ENCODE measurements at regions of chr7 and their contacts with region 1.

Region 1: DNA sequence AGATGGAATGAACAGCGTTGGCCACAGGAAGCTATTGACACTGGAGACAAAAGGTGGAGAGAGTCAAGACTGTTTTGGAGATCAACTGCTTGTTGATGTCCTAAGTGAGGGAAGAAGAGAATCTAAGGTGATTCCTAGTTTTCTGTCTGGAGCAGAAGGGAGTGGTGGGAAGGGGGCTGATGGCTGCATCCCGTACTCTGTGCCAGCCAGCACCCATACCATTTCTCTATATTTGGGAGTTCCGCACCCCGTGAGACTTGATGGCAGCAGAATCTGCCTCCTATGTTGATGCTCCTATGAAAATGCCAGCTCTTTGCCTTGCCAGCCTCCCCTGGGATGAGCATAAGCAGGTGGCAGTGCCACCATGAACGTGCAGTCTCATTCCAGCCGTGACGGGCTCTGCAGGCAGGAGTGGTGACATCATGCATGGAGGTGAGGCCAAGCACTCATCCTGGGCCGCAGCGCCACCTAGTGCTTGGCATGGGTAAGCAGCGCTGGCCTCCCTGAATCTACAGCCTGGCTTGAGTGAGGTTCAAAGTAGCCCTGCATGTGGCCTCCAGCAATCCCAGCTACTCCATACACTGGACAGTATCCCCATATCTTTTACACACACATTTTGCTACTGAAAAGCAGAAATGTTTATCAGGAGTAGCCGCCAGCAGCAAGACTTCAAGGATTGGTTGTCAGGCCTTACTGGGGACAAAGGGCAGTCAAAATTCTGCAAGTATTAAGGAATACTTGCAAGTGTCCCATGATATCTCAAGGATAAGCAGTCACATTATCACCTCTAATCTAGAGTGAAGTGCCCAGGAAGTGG is 43.0 kb downstream of the PODXL start:
- DNase-seq: peak; percentile 86
- H3K4me3 Mint-ChIP-seq: no peak overlapping the region
- H3K27ac Mint-ChIP-seq: peak overlapping the region; percentile 17
- H3K4me1 Mint-ChIP-seq: peaks cover 7% of the 10 kb centered on the region
- H3K27me3 Mint-ChIP-seq: no peaks in the 10 kb centered on the region
- CTCF ChIP-seq: peak; percentile 87

Region 2: DNA sequence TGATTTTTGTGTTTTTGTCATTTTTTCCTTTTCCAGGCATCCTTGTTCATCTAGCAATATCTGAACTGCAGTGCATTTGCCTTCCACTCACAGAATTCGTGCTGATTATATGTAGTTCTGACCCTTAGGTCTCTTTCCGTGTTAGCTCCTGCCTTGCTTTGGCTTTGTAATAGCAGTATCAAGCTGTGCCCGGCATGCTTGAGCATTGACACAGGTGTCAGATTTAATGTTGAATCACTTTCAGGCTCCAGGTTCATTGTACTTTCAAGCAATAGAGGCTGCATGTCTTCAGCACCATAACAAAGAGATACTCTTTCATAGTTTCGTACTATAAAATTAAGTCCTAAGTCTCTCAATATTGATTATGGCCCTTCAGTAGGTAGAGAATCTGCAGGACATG is 41.8 kb before region 1 on chr7:
- CTCF ChIA-PET with region 1: no interaction called
- POLR2A ChIA-PET with region 1: no interaction called
- intact Hi-C with region 1: no loop called
- DNase-seq: no peak
- H3K4me3 Mint-ChIP-seq: no peak overlapping the region
- H3K27ac Mint-ChIP-seq: no peak overlapping the region
- H3K4me1 Mint-ChIP-seq: no peaks in the 10 kb centered on the region
- H3K27me3 Mint-ChIP-seq: no peaks in the 10 kb centered on the region
- CTCF ChIP-seq: no peak

Region 3: DNA sequence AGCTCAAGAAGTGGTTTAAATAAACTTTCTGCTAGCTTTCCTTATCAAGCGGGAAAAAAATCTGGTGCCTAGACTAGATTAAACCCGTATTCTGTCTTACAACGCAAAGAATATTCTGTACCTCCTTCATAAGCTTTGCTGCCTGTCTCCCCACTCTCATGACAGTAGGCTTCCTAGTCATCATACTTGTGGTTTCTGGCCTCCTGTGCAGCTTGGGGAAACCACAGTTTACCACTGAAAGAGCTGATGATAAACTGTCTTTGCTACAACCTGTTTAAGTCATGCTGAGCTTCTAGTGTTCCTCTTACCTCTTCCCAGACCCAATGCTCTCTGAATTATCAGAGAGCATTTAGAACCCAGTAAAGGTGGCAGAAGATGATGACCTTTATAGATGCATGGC is 12.0 kb before region 1 on chr7:
- CTCF ChIA-PET with region 1: interaction called, 24 read pairs
- POLR2A ChIA-PET with region 1: interaction called, 4 read pairs
- intact Hi-C with region 1: no loop called
- DNase-seq: no peak
- H3K4me3 Mint-ChIP-seq: no peak overlapping the region
- H3K27ac Mint-ChIP-seq: no peak overlapping the region
- H3K4me1 Mint-ChIP-seq: no peaks in the 10 kb centered on the region
- H3K27me3 Mint-ChIP-seq: no peaks in the 10 kb centered on the region
- CTCF ChIP-seq: no peak

Region 4: GRCh38 chr7:131546583-131547111 is 33.2 kb after region 1 on chr7:
- CTCF ChIA-PET with region 1: interaction called, 10 read pairs
- POLR2A ChIA-PET with region 1: no interaction called
- intact Hi-C with region 1: no loop called
- DNase-seq: peak; percentile 33
- H3K4me3 Mint-ChIP-seq: no peak overlapping the region
- H3K27ac Mint-ChIP-seq: no peak overlapping the region
- H3K4me1 Mint-ChIP-seq: peaks cover 14% of the 10 kb centered on the region
- H3K27me3 Mint-ChIP-seq: no peaks in the 10 kb centered on the region
- CTCF ChIP-seq: peak; percentile 60

Region 5: GRCh38 chr7:131554880-131555516 is 41.5 kb after region 1 on chr7:
- CTCF ChIA-PET with region 1: interaction called, 10 read pairs
- POLR2A ChIA-PET with region 1: interaction called, 4 read pairs
- intact Hi-C with region 1: no loop called
- DNase-seq: no peak
- H3K4me3 Mint-ChIP-seq: peak overlapping the region; percentile 67
- H3K27ac Mint-ChIP-seq: no peak overlapping the region
- H3K4me1 Mint-ChIP-seq: no peaks in the 10 kb centered on the region
- H3K27me3 Mint-ChIP-seq: peaks cover 21% of the 10 kb centered on the region
- CTCF ChIP-seq: no peak

Region 6: DNA sequence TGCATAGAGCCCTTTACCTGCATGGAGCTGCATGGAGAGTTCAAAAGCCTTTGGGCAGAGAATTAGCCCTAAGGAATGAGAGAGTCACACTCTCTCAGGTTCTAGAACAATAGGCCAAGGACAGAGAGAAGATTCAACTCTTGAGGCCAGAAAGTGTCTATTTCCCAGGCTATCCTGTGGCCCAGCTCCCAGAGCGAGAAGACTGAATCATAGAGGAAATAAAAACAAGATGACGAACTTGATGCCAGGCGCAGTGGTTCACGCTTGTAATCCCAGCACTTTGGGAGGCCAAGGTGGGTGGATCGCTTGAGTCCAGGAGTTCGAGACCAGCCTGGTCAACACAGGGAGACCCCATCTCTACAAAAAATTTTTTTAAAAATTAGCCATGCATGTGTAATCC is 61.3 kb after region 1 on chr7:
- CTCF ChIA-PET with region 1: no interaction called
- POLR2A ChIA-PET with region 1: no interaction called
- intact Hi-C with region 1: no loop called
- DNase-seq: peak; percentile 36
- H3K4me3 Mint-ChIP-seq: no peak overlapping the region
- H3K27ac Mint-ChIP-seq: no peak overlapping the region
- H3K4me1 Mint-ChIP-seq: no peaks in the 10 kb centered on the region
- H3K27me3 Mint-ChIP-seq: no peaks in the 10 kb centered on the region
- CTCF ChIP-seq: no peak

Region 7: DNA sequence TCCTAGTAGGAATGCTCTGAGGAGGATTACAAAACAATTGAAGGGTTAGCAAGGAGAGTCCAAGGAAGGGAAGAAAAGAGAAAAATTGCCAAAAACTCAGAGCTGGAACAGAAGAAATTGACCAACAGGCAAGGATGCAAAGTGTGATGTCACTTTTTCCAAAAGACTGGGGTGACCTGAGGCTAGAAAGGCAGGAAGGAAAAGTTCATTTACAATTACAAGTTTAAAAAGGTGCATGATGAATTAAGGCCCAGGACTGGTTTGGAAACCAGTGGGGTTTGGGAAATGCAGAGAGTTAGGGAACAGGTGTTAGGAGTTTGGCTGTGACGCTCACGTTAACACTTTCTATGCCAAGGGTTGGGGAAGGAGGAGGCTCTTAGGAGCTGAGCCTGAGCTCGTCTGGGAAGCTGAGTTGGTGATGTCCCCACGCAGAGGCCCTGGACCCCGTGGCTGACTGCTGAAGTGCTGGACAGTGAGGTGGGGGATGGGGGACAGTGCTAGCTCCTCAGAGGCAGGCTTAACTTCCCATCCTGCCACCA is 135.6 kb after region 1 on chr7:
- CTCF ChIA-PET with region 1: interaction called, 204 read pairs
- POLR2A ChIA-PET with region 1: no interaction called
- intact Hi-C with region 1: loop called (anchors 1 kb)
- DNase-seq: no peak
- H3K4me3 Mint-ChIP-seq: no peak overlapping the region
- H3K27ac Mint-ChIP-seq: no peak overlapping the region
- H3K4me1 Mint-ChIP-seq: no peaks in the 10 kb centered on the region
- H3K27me3 Mint-ChIP-seq: no peaks in the 10 kb centered on the region
- CTCF ChIP-seq: no peak

Measured in MCF 10A (cell line).